ENCODE measurements at regions of chr1 and their contacts with region 1.

Region 1: GRCh38 chr1:89598450-89599331 is 34.2 kb upstream of the LRRC8C start:
- DNase-seq: peak in 3 of 42 donors; percentile 30 to 67 (median 41)

Region 2: DNA sequence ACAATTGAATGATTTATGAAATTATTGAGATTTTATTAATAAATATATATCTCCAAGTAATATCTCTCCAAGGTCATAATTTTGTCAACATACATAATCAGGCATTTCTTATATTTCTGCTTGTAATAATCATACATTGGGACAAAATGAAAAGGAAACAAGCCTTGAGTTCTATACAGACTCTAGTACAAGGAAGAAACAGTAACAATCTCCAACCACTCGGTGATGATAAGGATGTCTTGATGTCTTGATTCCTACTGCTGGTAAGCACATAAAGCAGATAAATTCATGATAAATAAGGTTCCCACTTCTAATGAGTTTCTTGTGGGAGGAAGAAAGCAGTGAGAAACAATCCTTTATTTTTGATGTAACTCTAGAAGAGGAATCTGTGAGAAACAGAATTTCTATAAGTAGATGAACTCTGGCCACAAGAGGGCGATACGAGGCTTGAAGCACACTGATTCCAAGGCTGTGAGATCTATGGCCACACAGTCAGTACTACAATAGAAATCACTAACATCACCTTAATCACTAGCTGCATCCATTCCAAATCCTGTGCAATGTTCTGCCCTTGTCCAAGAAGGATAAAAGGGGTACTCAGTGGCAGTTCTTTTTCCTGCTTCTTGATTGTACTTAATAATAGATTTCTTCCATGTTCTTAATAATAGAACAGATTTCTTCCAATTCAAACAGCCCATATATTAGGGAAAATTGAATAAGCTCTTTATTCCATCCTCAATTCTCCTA is 115.5 kb before region 1 on chr1:
- intact Hi-C with region 1: loop called (anchors 5 kb)
- DNase-seq: peak; percentile 45 to 96 (median 86)

Region 3: DNA sequence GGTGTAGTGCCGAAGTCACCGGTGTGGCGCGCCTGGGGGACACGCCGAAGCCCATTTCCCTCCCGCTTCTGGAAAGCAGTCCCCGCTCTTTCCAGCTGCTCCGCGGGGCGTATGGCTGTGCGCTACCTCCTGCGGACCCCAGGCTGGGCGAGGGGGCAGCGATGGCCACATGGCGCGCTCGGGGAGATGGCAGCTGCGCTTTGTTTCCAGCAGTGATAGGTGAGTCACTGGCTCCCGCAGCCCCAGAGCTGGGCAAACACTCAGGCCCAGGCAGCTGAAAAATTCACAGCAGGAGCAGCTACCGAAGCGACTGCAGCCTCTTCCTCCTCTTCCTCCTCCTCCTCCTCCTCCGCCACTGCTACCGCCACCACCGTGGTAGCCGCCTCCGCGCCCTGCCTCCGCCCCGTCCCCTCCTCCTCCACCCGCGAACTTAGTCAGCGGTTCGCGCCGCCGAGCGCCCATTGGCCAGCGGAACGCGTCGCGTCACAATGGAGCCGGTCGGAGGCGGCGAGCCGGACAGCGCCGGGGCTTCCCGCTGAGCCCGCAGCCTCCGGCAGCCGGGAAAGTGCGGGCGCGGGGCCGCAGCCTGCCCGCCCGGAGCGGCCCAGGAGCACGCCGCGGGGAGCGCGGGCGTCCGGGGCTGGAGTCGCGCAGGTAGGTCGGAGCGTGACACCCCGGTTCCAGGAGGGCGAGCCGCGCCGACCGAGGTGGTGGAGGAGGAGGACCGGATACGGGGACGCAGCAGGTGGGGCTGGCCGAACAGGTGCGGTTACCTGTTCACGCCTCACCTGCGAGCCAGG is 74.1 kb before region 1 on chr1 and contains the start of gene LRRC8B:
- intact Hi-C with region 1: loop called (anchors 10 kb)
- DNase-seq: peak; percentile 81 to 97 (median 94)